HAP-1 (cell line): ENCODE measurements at regions of chr17 and their contacts with region 1.

Region 1: GRCh38 chr17:34980681-34981537 is 597 bp downstream of the LIG3 start:
- DNase-seq: peak; percentile 71 to 74
- H3K4me3 ChIP-seq: peak overlapping the region; percentile 93
- H3K4me1 ChIP-seq: peaks cover 13% of the 10 kb centered on the region
- H3K27me3 ChIP-seq: no peaks in the 10 kb centered on the region

Region 2: DNA sequence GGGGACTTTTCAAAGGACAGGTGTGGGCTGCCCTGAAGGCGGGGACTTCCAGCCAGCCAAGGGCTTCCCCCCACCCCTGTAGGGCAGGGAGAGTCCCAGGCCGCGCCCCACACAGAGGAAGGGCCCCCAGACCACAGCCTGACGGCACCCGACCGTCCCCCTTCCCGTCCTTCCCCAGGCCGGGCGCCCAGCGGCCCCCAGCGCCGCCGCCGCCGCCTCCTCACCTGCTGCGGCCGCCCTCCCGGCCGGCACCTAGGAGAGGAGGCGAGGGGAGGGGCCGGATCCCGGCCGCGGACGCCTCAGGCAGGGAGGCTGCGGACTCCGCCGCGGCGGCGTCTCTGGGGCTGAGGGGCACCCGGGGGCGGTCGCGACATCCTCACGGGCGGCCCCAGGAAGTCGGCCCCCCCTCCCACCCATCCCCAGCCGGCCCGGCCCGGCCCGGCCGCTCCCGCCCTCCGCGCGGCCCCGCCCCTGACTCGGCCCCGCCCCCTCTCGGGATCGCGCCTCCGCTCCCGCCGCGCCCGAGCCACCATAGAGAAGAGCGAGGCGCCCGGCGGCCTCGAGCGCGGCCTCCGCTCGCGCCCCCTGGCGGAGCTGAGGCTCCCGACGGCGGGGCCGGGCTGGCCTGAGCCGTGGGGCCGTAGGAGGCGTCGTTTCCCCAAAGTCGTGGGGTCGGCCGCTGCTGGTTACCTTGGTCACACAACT is 108.1 kb after region 1 on chr17:
- in situ Hi-C with region 1: loop called (anchors 10 kb)
- DNase-seq: peak; percentile 68 to 89
- H3K4me3 ChIP-seq: peak overlapping the region; percentile 58
- H3K4me1 ChIP-seq: peaks cover 37% of the 10 kb centered on the region
- H3K27me3 ChIP-seq: no peaks in the 10 kb centered on the region